Posterior cingulate gyrus (tissue), 11 donors: ENCODE measurements at regions of chr5 and their contacts with region 1.

Region 1: GRCh38 chr5:72955768-72956323 is at the start of gene FCHO2:
- DNase-seq: peak; percentile 93 to 99 (median 96)

Region 2: GRCh38 chr5:71864730-71865601 is 1090.9 kb before region 1 on chr5:
- intact Hi-C with region 1: no loop called
- DNase-seq: peak in 7 of 10 donors; percentile 27 to 89 (median 67)

Region 3: GRCh38 chr5:72611118-72611730 is 344.6 kb before region 1 on chr5:
- intact Hi-C with region 1: loop called (anchors 10 kb)
- DNase-seq: peak; percentile 72 to 98 (median 82)

Region 4: GRCh38 chr5:72723581-72723980 is 232.3 kb before region 1 on chr5:
- intact Hi-C with region 1: no loop called
- DNase-seq: no peak

Region 5: GRCh38 chr5:72847989-72848473 is 107.8 kb before region 1 on chr5:
- intact Hi-C with region 1: loop called (anchors 2 kb)
- DNase-seq: peak; percentile 92 to 99 (median 96)

Region 6: DNA sequence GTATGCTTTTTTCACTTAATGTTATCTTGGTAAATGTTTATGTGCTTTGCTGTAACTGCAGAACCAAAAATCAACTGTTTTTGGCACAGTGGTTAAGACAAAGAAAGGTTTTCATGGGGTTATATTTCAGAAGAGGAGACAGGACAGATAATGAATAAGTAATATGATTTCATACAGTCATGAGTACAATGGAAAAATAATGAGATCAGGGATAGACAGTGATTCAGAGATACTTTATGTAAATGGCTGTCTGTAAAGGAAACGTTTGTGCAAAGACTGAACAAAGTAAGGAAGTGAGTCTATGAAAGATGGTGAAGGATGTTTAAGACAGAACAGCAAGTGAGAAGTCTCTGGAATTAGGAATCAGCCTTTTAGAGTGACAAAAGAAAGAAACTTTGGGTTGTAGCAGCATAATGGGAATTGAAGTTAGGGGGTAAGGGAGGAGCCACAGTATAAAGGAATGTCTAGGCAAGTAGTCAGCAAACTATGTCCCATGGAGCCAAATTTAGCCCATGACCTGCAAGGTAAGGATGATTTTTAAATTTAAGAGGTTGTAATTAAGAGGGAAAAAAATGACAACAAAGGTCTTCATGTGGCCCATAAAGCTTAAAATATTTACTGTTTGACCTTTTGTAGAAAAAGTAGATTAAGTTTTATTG is 84.4 kb before region 1 on chr5:
- intact Hi-C with region 1: no loop called
- DNase-seq: no peak

Region 7: DNA sequence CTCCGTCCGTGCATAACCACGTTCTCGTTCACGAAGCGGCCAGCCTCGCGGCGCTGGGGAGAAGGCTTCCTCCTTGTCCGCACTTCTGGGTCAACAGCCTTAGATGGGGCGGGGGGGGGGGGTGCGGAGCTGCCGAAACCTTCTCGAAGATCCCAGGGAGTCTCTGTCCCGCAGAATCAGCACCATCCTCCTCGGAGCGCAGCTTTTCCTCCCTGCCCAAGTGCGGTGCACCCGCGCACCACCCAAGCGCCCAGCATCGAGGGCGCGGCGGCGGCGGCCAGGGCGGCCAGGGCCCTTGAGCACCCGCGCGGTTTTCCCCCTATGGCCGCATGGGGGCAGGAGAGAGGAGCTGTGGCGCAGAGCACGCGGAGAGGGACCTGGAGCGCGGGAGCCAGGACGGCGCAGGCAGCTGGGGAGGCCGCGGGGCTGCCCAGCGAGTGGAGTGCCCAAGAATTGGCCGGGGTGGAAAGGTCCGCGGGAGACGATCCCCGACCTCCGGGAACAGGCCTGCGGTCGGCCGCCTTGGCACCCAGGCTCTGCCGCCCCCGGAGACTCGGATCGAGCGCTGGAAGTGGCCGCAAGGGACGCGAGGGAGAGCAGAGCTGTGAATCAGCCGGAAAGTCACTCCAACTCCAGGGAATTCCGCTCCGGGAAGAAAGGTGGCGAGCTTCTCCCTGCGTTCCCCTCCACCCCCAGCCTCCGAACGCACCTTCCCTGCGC is 260.2 kb after region 1 on chr5:
- intact Hi-C with region 1: loop called (anchors 5 kb)
- DNase-seq: peak in 9 of 10 donors; percentile 39 to 94 (median 72)